ENCODE measurements at regions of chr19 and their contacts with region 1.

Region 1: DNA sequence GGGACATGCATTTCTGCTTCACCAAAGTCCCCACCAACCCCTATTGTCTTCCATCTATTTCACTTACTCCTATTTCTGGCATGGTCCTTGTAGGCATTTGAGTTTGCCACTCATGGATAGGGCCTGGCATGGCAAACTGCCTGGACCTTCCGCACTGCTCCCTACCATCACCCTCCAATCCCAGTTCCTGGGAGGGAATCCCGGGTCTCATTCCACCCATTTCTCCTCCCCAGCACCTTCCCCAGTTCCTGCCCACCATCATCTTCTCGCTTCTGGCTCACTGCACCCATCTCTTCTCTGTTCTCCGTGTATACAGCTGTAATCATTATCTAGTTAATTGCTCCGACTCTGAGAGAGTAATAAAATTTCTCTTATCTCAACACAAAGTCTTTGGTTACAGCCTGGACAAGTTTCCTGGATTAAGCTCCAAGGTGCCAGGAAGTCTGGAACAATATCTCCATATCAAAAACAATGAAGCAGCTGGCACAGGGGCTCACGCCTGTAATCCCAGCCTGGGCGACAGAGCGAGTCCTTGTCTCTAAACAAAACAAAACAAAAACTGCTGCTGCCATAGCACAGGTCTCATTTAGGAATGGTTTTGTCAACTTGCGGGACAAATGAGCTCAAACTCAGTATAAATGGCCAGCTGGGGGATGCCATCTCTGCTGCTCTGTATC is 17.0 kb upstream of the COX7A1 start:
- DNase-seq: no peak
- H3K4me3 ChIP-seq: no peak overlapping the region
- H3K27ac ChIP-seq: peak overlapping the region; percentile 71
- H3K4me1 ChIP-seq: peaks cover 22% of the 10 kb centered on the region
- H3K27me3 ChIP-seq: no peaks in the 10 kb centered on the region
- CTCF ChIP-seq: no peak

Region 2: DNA sequence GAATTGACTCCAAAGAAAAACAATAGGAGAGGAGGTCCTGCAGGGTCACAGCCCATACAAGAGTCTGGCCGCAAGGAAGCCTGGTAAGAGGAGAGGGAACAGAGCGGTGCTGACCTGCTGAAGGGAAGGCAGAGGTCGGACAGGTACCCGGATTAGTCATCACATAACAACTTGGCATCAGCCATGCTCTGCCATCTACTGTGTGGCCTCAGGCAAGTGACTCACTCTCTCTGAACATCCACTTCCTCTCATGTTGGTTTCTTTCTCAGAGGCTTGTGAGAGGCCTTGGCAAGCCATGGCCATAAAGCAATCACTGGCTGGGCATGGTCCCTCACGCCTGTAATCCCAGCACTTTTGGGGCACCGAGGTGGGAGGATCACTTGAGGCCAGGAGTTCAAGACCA is 36.7 kb before region 1 on chr19:
- intact Hi-C with region 1: loop called (anchors 2 kb)
- DNase-seq: no peak
- H3K4me3 ChIP-seq: no peak overlapping the region
- H3K27ac ChIP-seq: no peak overlapping the region
- H3K4me1 ChIP-seq: peaks cover 37% of the 10 kb centered on the region
- H3K27me3 ChIP-seq: no peaks in the 10 kb centered on the region
- CTCF ChIP-seq: no peak

Region 3: DNA sequence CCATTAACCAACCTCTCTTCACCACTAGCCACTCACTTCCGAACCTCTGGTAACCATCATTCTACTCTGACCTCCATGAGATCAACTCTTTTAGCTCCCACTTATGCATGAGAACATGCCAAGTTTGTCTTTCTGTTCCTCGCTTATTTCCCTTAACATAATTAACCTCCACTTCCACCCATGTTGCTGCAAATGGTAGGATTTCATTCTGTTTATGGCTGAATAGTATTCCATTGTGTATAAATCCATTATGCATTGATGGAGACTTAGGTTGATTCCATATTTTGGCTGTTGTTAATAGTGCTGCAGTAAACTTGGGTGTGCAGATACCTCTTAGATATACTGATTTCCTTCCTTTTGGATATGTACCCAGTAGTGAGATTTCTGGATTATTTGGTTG is 466.1 kb after region 1 on chr19:
- intact Hi-C with region 1: no loop called
- DNase-seq: no peak
- H3K4me3 ChIP-seq: no peak overlapping the region
- H3K27ac ChIP-seq: no peak overlapping the region
- H3K4me1 ChIP-seq: no peaks in the 10 kb centered on the region
- H3K27me3 ChIP-seq: no peaks in the 10 kb centered on the region
- CTCF ChIP-seq: no peak